ENCODE measurements at regions of chr17 and their contacts with region 1.

Region 1: DNA sequence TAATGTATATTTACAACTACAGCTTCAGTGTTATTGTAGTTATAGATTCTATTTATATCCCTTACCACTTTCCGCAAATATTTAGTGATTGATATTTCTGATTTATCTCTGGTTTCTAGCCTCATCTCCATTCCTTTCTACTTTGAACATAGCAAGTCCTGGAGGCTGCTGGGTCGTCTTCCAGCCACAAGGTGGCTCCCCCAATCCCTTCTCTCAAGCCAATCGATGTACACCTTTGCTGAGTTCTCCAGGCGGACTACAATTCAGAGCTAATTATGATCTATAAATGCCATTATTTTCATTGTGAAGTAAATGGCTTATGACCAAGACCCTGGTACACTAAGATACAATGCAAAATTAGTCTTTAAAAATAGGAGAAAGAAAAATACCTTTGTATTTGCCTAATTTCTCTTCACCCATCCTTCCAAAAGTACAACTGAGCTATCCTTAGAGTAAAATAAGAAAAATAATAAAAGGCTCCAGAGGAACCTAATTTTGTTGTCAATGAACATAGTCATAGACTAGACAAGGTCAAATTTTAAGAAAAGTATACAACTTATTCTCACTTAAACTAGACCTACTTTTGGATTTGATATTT is 122.1 kb downstream of the SKAP1 start:
- DNase-seq: peak; percentile 70
- ATAC-seq: peak; percentile 72
- H3K4me3 ChIP-seq: no peak overlapping the region
- H3K4me3 Mint-ChIP-seq: no peak overlapping the region
- H3K27ac ChIP-seq: no peak overlapping the region
- H3K27ac Mint-ChIP-seq: no peak overlapping the region
- H3K4me1 ChIP-seq: no peaks in the 10 kb centered on the region
- H3K4me1 Mint-ChIP-seq: peaks cover 3% of the 10 kb centered on the region
- H3K27me3 ChIP-seq: no peaks in the 10 kb centered on the region
- H3K27me3 Mint-ChIP-seq: peaks cover 4% of the 10 kb centered on the region
- CTCF ChIP-seq: peak; percentile 88

Region 2: GRCh38 chr17:48295362-48296288 is 12.3 kb before region 1 on chr17:
- CTCF ChIA-PET with region 1: interaction called, 19 read pairs
- POLR2A ChIA-PET with region 1: no interaction called
- intact Hi-C with region 1: no loop called
- DNase-seq: peak; percentile 70
- ATAC-seq: peak; percentile 92
- H3K4me3 ChIP-seq: peak overlapping the region; percentile 12 to 59 (median 43)
- H3K4me3 Mint-ChIP-seq: peak overlapping the region; percentile 80
- H3K27ac ChIP-seq: peak overlapping the region; percentile 45 to 57
- H3K27ac Mint-ChIP-seq: peak overlapping the region; percentile 84
- H3K4me1 ChIP-seq: peaks cover 13 to 14% of the 10 kb centered on the region in 2 donors
- H3K4me1 Mint-ChIP-seq: peaks cover 18% of the 10 kb centered on the region
- H3K27me3 ChIP-seq: no peaks in the 10 kb centered on the region
- H3K27me3 Mint-ChIP-seq: no peaks in the 10 kb centered on the region
- CTCF ChIP-seq: no peak

Region 3: DNA sequence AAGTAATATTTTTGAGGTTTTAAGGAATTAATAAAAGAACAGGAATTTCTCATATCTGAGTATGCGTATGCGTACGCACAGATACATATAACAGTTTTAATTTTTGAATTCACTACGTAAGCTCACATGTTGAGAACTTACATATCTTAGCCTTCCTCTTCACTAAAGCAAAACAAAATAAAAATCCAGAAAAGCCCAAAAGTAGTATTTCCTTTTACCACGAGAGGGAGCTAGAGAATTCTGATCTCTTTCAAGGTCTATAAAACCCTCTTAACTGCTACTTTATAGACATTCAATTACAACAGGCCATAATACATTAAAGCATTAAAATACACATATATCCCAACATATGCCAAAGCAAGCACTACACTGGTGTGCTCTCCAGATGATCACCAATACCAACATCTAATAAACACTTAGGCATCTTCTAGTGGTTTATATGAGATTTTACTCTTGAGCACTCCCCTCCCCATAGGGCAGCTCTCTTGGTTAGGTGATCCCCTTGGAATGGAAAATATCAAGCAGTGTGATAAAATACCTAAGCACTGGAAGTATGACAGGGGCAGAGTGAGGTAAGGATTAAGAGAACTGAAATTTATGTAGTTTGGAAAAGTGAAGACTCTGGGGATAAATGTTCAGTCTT is 28.1 kb after region 1 on chr17:
- CTCF ChIA-PET with region 1: interaction called, 29 read pairs
- POLR2A ChIA-PET with region 1: no interaction called
- intact Hi-C with region 1: no loop called
- DNase-seq: peak; percentile 79
- ATAC-seq: peak; percentile 47
- H3K4me3 ChIP-seq: no peak overlapping the region
- H3K4me3 Mint-ChIP-seq: no peak overlapping the region
- H3K27ac ChIP-seq: no peak overlapping the region
- H3K27ac Mint-ChIP-seq: no peak overlapping the region
- H3K4me1 ChIP-seq: no peaks in the 10 kb centered on the region
- H3K4me1 Mint-ChIP-seq: no peaks in the 10 kb centered on the region
- H3K27me3 ChIP-seq: no peaks in the 10 kb centered on the region
- H3K27me3 Mint-ChIP-seq: peaks cover 4% of the 10 kb centered on the region
- CTCF ChIP-seq: peak; percentile 91

Region 4: GRCh38 chr17:48586355-48587258 is 278.7 kb after region 1 on chr17:
- CTCF ChIA-PET with region 1: interaction called, 13 read pairs
- POLR2A ChIA-PET with region 1: no interaction called
- intact Hi-C with region 1: no loop called
- DNase-seq: peak; percentile 61
- ATAC-seq: no peak
- H3K4me3 ChIP-seq: peak overlapping the region in 3 of 5 experiments; percentile 59 to 64 (median 59)
- H3K4me3 Mint-ChIP-seq: peak overlapping the region; percentile 97
- H3K27ac ChIP-seq: no peak overlapping the region
- H3K27ac Mint-ChIP-seq: no peak overlapping the region
- H3K4me1 ChIP-seq: peaks cover 43 to 57% of the 10 kb centered on the region in 2 donors
- H3K4me1 Mint-ChIP-seq: peaks cover 39% of the 10 kb centered on the region
- H3K27me3 ChIP-seq: peaks cover 0 to 99% (median 89%) of the 10 kb centered on the region in 4 experiments
- H3K27me3 Mint-ChIP-seq: peaks cover 93% of the 10 kb centered on the region
- CTCF ChIP-seq: no peak

Region 5: DNA sequence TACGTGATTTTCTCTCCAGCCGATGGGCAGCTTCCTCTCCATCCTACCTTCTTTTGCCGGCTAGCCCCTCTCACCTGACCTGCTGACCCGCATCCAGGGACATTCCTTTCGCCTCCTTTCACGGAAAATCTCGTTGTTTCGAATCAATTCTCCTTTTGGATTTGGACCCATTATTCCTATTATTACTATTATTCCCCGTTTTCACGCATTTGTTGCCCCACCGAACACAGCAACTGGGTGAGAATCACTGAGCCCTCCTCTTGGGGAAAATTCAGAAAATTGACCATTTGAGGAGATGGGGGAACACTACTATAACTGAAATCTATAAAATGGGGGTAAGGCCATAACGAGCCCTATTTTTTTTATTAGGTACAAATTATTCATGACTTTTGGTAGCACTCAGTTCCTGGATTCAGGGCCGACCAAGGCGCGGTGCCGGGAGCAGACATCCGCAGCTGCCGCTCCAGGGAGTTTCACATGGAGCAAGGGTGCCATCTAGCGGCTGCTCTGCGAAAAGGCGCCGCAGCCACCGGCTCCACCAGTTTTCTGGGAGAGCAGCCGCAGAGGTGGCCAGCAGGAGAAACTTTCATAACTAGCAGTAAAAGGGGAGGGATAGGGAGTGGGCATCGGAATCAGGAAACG is 310.5 kb after region 1 on chr17:
- CTCF ChIA-PET with region 1: interaction called, 34 read pairs
- POLR2A ChIA-PET with region 1: no interaction called
- intact Hi-C with region 1: loop called (anchors 1 kb)
- DNase-seq: peak; percentile 87
- ATAC-seq: peak; percentile 71
- H3K4me3 ChIP-seq: no peak overlapping the region
- H3K4me3 Mint-ChIP-seq: no peak overlapping the region
- H3K27ac ChIP-seq: no peak overlapping the region
- H3K27ac Mint-ChIP-seq: peak overlapping the region; percentile 74
- H3K4me1 ChIP-seq: peaks cover 33 to 51% of the 10 kb centered on the region in 2 donors
- H3K4me1 Mint-ChIP-seq: peaks cover 28% of the 10 kb centered on the region
- H3K27me3 ChIP-seq: peaks cover 0 to 97% (median 72%) of the 10 kb centered on the region in 4 experiments
- H3K27me3 Mint-ChIP-seq: peaks cover 86% of the 10 kb centered on the region
- CTCF ChIP-seq: peak; percentile 97

Measured in B cell (primary cell).